IMR-90 (cell line): ENCODE measurements at regions of chr6 and their contacts with region 1.

Region 1: GRCh38 chr6:56542364-56543331 is 100.0 kb downstream of the DST start:
- DNase-seq: peak; percentile 98
- ATAC-seq: peak; percentile 95
- H3K4me3 ChIP-seq: peak overlapping the region; percentile 79
- H3K27ac ChIP-seq: peak overlapping the region; percentile 97
- H3K4me1 ChIP-seq: peaks cover 2% of the 10 kb centered on the region
- H3K27me3 ChIP-seq: no peaks in the 10 kb centered on the region
- CTCF ChIP-seq: peak; percentile 38
- POLR2A ChIP-seq: peak; percentile 90
- RAD21 ChIP-seq: peak; percentile 18; the same call in 1 of the 2 replicates

Region 2: GRCh38 chr6:56524891-56525703 is 17.6 kb before region 1 on chr6:
- CTCF ChIA-PET with region 1: interaction called, 5 read pairs
- POLR2A ChIA-PET with region 1: interaction called, 5 read pairs
- dilution Hi-C with region 1: no loop called
- in situ Hi-C with region 1: no loop called
- intact Hi-C with region 1: loop called (anchors 1 kb)
- DNase-seq: peak; percentile 96
- ATAC-seq: peak; percentile 80
- H3K4me3 ChIP-seq: no peak overlapping the region
- H3K27ac ChIP-seq: peak overlapping the region; percentile 96; the same call in 1 of the 2 replicates
- H3K4me1 ChIP-seq: peaks cover 30% of the 10 kb centered on the region
- H3K27me3 ChIP-seq: no peaks in the 10 kb centered on the region
- CTCF ChIP-seq: no peak
- POLR2A ChIP-seq: no peak
- RAD21 ChIP-seq: no peak

Region 3: DNA sequence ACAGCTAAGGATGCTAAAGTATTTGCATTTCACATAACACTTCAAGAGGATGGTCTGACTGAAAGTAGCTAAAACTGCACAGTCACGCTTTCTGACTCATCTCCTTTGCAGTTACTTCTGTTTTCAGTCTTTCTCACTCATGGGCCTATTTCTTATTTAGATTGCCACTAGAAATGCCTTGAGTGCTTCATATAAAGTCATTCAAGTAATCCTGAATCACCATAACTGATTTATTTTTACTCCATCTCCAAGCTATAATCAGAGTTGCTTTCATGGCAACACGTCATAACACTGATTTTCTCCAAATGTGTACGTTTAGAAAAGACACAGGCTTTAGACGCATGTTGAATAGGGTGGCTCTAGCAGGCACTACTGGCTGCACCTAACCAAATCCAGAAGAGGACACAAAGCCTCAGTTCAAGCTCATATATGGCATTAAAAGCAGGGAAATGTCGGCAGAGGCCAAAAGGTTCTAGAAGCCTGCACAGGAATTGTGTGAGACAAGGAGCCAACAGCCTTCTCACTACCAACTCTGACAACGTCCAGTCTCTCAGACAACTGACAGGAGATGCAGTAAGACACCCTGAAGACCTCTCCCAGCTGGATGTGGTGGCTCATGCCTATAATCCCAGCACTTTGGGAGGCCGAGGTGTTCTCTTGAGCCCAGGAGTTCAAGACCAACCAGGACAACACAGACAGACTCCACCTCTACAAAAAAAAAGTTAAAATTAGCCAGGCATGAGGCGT is 348.2 kb after region 1 on chr6:
- CTCF ChIA-PET with region 1: no interaction called
- POLR2A ChIA-PET with region 1: no interaction called
- dilution Hi-C with region 1: no loop called
- in situ Hi-C with region 1: no loop called
- intact Hi-C with region 1: no loop called
- DNase-seq: peak; percentile 97
- ATAC-seq: peak; percentile 91
- H3K4me3 ChIP-seq: no peak overlapping the region
- H3K27ac ChIP-seq: peak overlapping the region; percentile 79
- H3K4me1 ChIP-seq: peaks cover 14% of the 10 kb centered on the region
- H3K27me3 ChIP-seq: no peaks in the 10 kb centered on the region
- CTCF ChIP-seq: no peak
- POLR2A ChIP-seq: 0 out of 2 replicates have a peak, but pooled peaks have one; percentile 45
- RAD21 ChIP-seq: no peak